ENCODE measurements at regions of chr6 and their contacts with region 1.

Region 1: GRCh38 chr6:70667711-70668498 is at the start of gene SMAP1:
- DNase-seq: peak; percentile 93 to 97 (median 96)
- H3K4me3 ChIP-seq: peak within 1 kb of the TSS; percentile 59 to 91 (median 82)
- H3K27ac ChIP-seq: peak within 1 kb of the TSS; percentile 74 to 96 (median 90)
- H3K4me1 ChIP-seq: peaks cover 11 to 31% of the 10 kb centered on the region in 2 donors
- H3K27me3 ChIP-seq: no peaks in the 10 kb centered on the region
- CTCF ChIP-seq: no peak
- POLR2A ChIP-seq: peak; percentile 80 to 85
- total RNA-seq, gene SMAP1: 20.3 to 29.0 (median 24.2) TPM

Region 2: DNA sequence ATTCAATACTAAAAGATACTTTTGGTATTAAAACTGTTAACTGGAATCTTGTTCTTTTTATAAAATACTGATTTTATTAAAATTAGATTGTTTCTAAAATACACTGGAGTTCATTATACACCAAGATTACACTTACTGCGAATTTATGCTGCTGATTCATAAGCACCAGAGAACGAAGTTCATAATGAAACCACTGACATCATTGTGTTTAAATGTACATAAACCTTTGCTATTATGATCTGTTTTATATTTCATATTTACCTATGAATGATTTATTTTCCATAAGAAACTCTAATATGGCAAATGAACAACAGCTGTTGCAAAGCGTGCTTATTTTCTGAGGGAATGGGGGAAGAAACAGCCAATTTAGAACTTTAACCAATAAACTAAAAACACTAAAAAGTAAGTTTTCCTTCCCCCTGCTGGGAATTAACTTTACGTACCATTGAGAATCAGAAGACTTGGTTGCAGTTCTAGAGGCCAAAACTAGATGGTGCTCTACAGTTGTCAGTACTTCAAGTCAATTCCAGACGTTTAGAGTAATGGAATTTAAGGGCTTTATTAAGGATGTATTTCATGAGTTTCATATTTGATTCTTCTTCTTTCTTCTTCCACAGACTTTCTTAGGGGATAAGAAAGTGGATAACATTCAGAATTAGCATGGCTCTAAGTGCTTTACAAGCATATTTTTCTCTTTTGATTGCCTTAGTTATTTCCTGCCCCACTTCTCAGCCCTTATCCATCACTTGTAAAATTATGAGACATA is 832.3 kb before region 1 on chr6:
- intact Hi-C with region 1: no loop called
- DNase-seq: peak in 5 of 7 donors; percentile 14 to 50 (median 22)
- H3K4me3 ChIP-seq: no peak overlapping the region
- H3K27ac ChIP-seq: no peak overlapping the region
- H3K4me1 ChIP-seq: peaks cover 0 to 4% of the 10 kb centered on the region in 2 donors
- H3K27me3 ChIP-seq: no peaks in the 10 kb centered on the region
- CTCF ChIP-seq: peak; percentile 47 to 82 (median 69)
- POLR2A ChIP-seq: no peak

Region 3: GRCh38 chr6:70413114-70413991 is 254.6 kb before region 1 on chr6 and contains the start of gene FAM135A:
- intact Hi-C with region 1: no loop called
- DNase-seq: peak; percentile 99
- H3K4me3 ChIP-seq: peak within 1 kb of the TSS; percentile 65 to 87 (median 70)
- H3K27ac ChIP-seq: peak within 1 kb of the TSS in 4 of 5 donors; percentile 70 to 81 (median 76)
- H3K4me1 ChIP-seq: peaks cover 0 to 28% of the 10 kb centered on the region in 2 donors
- H3K27me3 ChIP-seq: no peaks in the 10 kb centered on the region
- CTCF ChIP-seq: no peak
- POLR2A ChIP-seq: peak; percentile 49 to 74
- total RNA-seq, gene FAM135A: 10.3 to 33.9 (median 15.3) TPM

Region 4: DNA sequence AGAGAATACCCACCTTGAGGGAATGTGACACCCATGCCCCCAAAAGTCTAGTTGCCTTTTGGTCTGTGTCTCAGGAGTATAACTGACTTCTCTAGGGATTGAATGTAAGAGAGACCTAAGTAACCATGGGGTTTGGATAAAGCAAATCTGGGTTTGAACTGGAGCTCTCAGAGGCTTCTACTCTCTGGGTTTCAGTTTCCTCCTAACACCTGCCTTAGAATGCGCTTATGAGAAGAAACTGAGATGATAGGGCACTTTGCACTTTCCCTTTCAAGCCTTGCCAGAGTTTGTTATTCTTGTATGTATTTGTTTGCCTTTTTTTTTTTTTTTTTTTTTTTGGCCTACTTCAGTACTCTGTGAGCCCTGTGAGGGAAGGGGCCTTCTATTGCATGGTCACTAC is 81.8 kb before region 1 on chr6:
- intact Hi-C with region 1: loop called in 1 of 2 experiments (anchors 10 kb)
- DNase-seq: no peak
- H3K4me3 ChIP-seq: no peak overlapping the region
- H3K27ac ChIP-seq: no peak overlapping the region
- H3K4me1 ChIP-seq: no peaks in the 10 kb centered on the region
- H3K27me3 ChIP-seq: no peaks in the 10 kb centered on the region
- CTCF ChIP-seq: no peak
- POLR2A ChIP-seq: no peak

Region 5: GRCh38 chr6:70790483-70791224 is 122.7 kb after region 1 on chr6:
- intact Hi-C with region 1: no loop called
- DNase-seq: no peak
- H3K4me3 ChIP-seq: no peak overlapping the region
- H3K27ac ChIP-seq: no peak overlapping the region
- H3K4me1 ChIP-seq: no peaks in the 10 kb centered on the region
- H3K27me3 ChIP-seq: no peaks in the 10 kb centered on the region
- CTCF ChIP-seq: no peak
- POLR2A ChIP-seq: no peak